ENCODE measurements at regions of chr22 and their contacts with region 1.

Region 1: DNA sequence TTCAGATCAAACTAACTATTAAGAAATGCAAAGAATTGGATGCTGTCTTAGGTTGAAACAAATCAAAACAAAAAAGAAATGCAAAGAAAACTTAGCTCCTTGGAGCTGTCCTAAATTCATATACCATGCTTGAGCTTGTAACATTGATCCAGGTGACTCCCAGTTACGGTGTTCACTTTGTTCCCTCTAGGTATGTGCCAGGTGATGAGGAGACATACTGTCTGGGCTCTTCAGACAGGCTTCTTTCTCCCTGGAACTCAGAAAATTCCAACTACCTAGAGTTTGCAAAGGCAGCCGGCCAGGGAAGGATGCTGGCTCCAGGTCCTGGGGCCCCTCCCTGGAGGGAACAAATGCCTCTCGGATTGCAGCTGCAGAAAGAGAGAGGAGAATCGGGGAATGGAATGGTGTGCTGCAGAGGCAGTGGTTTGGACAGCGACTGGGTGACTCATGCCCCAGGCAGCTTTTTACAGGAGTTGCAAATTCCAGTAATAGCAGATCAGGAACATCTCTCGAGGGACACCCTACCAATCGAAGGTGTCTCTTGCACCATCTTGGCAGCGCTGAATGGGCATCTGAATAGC is 12.3 kb upstream of the ASPHD2 start:
- DNase-seq: no peak
- H3K4me3 Mint-ChIP-seq: no peak overlapping the region
- H3K27ac Mint-ChIP-seq: no peak overlapping the region
- H3K4me1 Mint-ChIP-seq: no peaks in the 10 kb centered on the region
- H3K27me3 Mint-ChIP-seq: peaks cover 20% of the 10 kb centered on the region

Region 2: DNA sequence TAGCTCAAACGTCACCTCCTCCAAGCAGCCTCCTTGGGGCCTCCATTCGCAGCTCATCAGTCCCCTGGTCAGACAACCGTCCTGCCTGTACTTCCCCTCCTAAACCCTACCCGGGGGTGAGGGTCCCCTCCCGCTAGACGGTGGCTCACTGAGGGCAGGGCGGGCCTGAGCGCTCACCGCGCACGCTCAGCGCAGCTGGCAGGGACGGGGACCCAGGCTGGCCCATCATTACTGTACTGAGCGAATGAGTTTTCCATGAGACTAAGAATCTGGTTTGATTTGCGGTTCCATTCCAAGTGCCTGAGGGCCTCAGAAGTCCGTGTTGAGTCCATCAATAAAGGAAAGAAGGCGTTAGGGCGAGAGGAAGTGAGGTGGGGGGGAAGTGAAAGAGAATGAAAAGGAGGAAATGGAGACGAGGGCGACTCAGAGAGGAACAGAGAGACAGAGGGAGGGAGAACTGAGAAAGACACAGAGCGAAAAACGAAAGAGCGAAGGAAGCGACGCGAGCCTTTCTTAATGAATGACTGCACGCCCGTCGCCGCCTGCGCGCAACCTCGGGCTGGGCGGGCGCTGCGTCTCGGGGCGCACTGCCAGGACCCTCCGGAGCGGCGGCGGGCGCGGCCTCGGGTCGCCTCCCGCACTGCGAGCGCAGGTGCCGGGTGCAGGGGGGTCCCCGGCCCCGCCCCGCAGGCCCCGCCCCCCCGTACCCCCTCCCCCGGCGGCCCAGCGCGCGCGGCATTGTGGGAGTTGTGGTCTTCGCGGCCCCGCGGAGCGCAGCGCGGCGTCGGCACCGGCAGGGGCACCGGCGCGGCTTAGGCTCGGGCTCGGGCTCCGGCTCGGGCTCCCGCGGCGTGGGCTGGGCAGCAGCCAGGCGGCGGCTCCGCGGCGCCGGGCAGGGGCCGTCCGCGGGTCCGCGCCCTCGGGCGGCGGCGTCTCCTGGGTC is 12.0 kb after region 1 on chr22 and contains the start of gene ASPHD2:
- CTCF ChIA-PET with region 1: interaction called, 10 read pairs
- POLR2A ChIA-PET with region 1: interaction called, 3 read pairs
- DNase-seq: peak; percentile 80
- H3K4me3 Mint-ChIP-seq: peak within 1 kb of the TSS; percentile 88
- H3K27ac Mint-ChIP-seq: peak within 1 kb of the TSS; percentile 97
- H3K4me1 Mint-ChIP-seq: peaks cover 55% of the 10 kb centered on the region
- H3K27me3 Mint-ChIP-seq: peaks cover 12% of the 10 kb centered on the region
- total RNA-seq, gene ASPHD2: 8.5 to 8.8 TPM

Measured in activated CD4-positive, alpha-beta T cell treated with anti-CD3 and anti-CD28 coated beads, Interleukin-2, amount 10 ng/mL, durations not matched to agents 7 days and 5 days (primary cell).